A549 (cell line): ENCODE measurements at regions of chr1 and their contacts with region 1.

Region 1: GRCh38 chr1:15949453-15950245 is 26.3 kb downstream of the ZBTB17 start:
- DNase-seq: peak; percentile 72 to 74
- ATAC-seq: peak; percentile 70 to 71
- H3K4me3 ChIP-seq: no peak overlapping the region
- H3K27ac ChIP-seq: peak overlapping the region; percentile 70 to 91
- H3K4me1 ChIP-seq: peaks cover 56% of the 10 kb centered on the region
- CTCF ChIP-seq: no peak
- EP300 ChIP-seq: no peak
- POLR2A ChIP-seq: no peak
- RAD21 ChIP-seq: no peak

Region 2: GRCh38 chr1:15975805-15976680 is 26.4 kb after region 1 on chr1 and contains the start of gene ZBTB17:
- CTCF ChIA-PET with region 1: no interaction called
- POLR2A ChIA-PET with region 1: interaction called, 12 read pairs
- DNase-seq: peak; percentile 84 to 90
- ATAC-seq: peak; percentile 96 to 98
- H3K4me3 ChIP-seq: peak within 1 kb of the TSS; percentile 66
- H3K27ac ChIP-seq: peak within 1 kb of the TSS; percentile 83 to 94
- H3K4me1 ChIP-seq: peaks cover 11% of the 10 kb centered on the region; the same call in 2 of the 3 replicates
- CTCF ChIP-seq: no peak
- EP300 ChIP-seq: no peak
- POLR2A ChIP-seq: peak; percentile 30; the same call in 1 of the 2 replicates
- RAD21 ChIP-seq: no peak
- polyA plus RNA-seq, gene ZBTB17: 13.8 and 14.9 TPM in 2 replicates

Region 3: DNA sequence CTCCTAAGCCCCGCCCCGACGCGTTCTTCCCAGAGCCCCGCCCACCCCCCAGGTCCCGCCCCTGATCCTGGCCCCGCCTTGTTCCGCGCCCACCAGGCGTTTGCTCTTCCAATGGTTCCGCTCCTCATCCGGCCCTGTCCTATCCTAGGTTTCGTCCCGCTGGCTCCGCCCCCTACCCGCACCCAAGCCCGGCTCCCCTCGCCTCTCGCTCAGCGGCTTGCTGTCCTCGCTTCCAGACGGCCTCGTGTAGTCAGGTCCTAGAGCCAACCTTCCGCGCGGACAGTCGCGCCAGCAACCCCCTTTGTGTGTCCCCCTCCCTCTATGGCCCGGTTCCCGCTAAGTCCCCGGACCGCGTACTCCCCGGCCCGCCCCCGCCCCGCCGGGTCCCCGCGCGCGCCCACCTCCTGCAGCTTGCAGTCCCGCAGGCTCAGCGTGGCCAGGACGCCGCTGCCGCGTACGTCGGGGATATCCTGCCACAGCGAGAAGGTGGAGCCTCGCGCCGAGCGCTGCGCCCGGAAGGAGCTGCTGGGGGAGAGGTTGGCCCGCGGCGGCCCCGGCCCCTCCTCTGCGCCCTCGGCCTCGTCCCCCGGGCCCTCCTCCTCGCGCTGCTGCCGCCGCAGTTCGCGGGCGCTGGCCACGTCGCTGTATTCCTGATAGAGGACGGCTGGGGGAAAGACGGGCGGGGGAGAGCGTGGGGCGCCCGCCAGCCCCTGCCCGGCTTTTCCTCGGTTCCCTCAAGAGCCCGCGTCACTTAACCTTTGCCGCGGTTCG is 257.1 kb after region 1 on chr1:
- CTCF ChIA-PET with region 1: no interaction called
- POLR2A ChIA-PET with region 1: no interaction called
- DNase-seq: peak; percentile 76 to 97
- ATAC-seq: peak; percentile 92 to 95
- H3K4me3 ChIP-seq: peak overlapping the region; percentile 51
- H3K27ac ChIP-seq: peak overlapping the region; percentile 84 to 95
- H3K4me1 ChIP-seq: peaks cover 26% of the 10 kb centered on the region
- CTCF ChIP-seq: no peak
- EP300 ChIP-seq: no peak
- POLR2A ChIP-seq: peak; percentile 85
- RAD21 ChIP-seq: no peak